HCT116 (cell line): ENCODE measurements at regions of chrX and their contacts with region 1.

Region 1: GRCh38 chrX:40573763-40574162 is 7.0 kb upstream of the ATP6AP2 start:
- DNase-seq: no peak
- ATAC-seq: peak; percentile 81
- H3K4me3 ChIP-seq: no peak overlapping the region
- H3K27ac ChIP-seq: no peak overlapping the region
- H3K4me1 ChIP-seq: no peaks in the 10 kb centered on the region
- H3K27me3 ChIP-seq: no peaks in the 10 kb centered on the region
- CTCF ChIP-seq: peak; percentile 68 to 98 (median 78)
- POLR2A ChIP-seq: no peak
- RAD21 ChIP-seq: peak; percentile 54

Region 2: GRCh38 chrX:40719218-40719617 is 145.5 kb after region 1 on chrX:
- CTCF ChIA-PET with region 1: no interaction called
- POLR2A ChIA-PET with region 1: no interaction called
- RAD21 ChIA-PET with region 1: no interaction called
- intact Hi-C with region 1: no loop called
- DNase-seq: no peak
- ATAC-seq: no peak
- H3K4me3 ChIP-seq: no peak overlapping the region
- H3K27ac ChIP-seq: no peak overlapping the region
- H3K4me1 ChIP-seq: no peaks in the 10 kb centered on the region
- H3K27me3 ChIP-seq: no peaks in the 10 kb centered on the region
- CTCF ChIP-seq: no peak
- POLR2A ChIP-seq: no peak
- RAD21 ChIP-seq: no peak

Region 3: GRCh38 chrX:40792433-40792832 is 218.7 kb after region 1 on chrX:
- CTCF ChIA-PET with region 1: no interaction called
- POLR2A ChIA-PET with region 1: no interaction called
- RAD21 ChIA-PET with region 1: no interaction called
- intact Hi-C with region 1: loop called (anchors 10 kb)
- DNase-seq: no peak
- ATAC-seq: no peak
- H3K4me3 ChIP-seq: no peak overlapping the region
- H3K27ac ChIP-seq: no peak overlapping the region
- H3K4me1 ChIP-seq: peaks cover 4 to 14% of the 10 kb centered on the region in 2 experiments; a peak in 3 of 4 replicates
- H3K27me3 ChIP-seq: no peaks in the 10 kb centered on the region
- CTCF ChIP-seq: no peak
- POLR2A ChIP-seq: no peak
- RAD21 ChIP-seq: no peak